ENCODE measurements at regions of chr12 and their contacts with region 1.

Region 1: DNA sequence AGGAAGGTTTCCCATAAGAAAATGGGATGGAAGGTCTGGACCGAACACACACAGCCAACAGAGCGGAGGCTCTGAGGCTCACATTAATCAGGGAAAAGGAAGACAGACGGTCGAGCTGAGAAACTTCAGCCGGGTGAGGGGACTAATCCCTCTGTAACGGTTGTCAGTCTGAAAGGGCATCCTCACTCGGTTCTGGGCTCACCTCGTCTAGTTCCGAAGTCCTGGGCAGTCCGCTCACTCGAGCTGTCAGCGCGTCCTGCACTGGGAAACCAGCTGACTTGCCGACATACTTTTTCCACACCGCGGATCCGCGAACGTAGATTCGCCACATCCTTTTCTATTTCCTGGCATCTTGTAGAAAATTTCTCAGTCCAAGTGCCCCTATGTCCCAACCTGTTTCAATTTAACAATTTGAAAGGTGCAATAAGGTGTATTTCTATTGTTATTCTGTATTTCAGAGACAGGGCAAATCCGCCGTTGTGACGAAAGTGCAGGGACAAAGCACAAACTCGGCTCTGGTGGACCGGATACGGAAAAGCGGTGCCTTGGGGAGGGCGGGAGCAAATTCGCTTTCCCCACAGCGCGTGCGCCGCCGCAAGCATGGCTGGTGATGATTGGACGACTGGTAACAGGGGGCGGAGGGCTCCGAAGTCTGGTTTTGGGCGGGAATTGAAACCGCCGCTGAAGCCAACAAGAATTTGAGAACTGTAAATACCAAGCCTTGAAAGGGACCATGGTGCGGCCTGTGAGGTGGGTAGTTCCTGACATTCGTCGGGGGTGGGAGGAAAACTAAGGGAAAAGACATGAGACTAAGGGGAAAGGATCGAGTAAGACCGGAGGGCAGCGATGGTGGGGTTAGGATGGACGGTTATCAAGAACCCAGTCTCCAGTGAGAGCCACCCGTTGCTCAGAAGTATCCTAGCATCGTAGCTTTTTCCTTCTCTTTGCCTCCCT is at the start of gene RAD51AP1:
- DNase-seq: peak; percentile 90 to 96
- H3K4me3 ChIP-seq: peak within 1 kb of the TSS; percentile 64 to 77
- H3K27ac ChIP-seq: peak within 1 kb of the TSS; percentile 81 to 89
- H3K4me1 ChIP-seq: peaks cover 0 to 17% (median 14%) of the 10 kb centered on the region in 4 donors
- H3K27me3 ChIP-seq: no peaks in the 10 kb centered on the region
- CTCF ChIP-seq: no peak

Region 2: GRCh38 chr12:4307593-4308333 is 230.7 kb before region 1 on chr12:
- intact Hi-C with region 1: loop called (anchors 10 kb)
- DNase-seq: peak; percentile 42 to 79
- H3K4me3 ChIP-seq: no peak overlapping the region
- H3K27ac ChIP-seq: no peak overlapping the region
- H3K4me1 ChIP-seq: peaks cover 0 to 8% (median 4%) of the 10 kb centered on the region in 4 donors
- H3K27me3 ChIP-seq: no peaks in the 10 kb centered on the region
- CTCF ChIP-seq: peak; percentile 57 to 63

Region 3: GRCh38 chr12:4518106-4518728 is 20.3 kb before region 1 on chr12:
- intact Hi-C with region 1: no loop called
- DNase-seq: no peak
- H3K4me3 ChIP-seq: no peak overlapping the region
- H3K27ac ChIP-seq: no peak overlapping the region
- H3K4me1 ChIP-seq: no peaks in the 10 kb centered on the region
- H3K27me3 ChIP-seq: no peaks in the 10 kb centered on the region
- CTCF ChIP-seq: no peak

Region 4: DNA sequence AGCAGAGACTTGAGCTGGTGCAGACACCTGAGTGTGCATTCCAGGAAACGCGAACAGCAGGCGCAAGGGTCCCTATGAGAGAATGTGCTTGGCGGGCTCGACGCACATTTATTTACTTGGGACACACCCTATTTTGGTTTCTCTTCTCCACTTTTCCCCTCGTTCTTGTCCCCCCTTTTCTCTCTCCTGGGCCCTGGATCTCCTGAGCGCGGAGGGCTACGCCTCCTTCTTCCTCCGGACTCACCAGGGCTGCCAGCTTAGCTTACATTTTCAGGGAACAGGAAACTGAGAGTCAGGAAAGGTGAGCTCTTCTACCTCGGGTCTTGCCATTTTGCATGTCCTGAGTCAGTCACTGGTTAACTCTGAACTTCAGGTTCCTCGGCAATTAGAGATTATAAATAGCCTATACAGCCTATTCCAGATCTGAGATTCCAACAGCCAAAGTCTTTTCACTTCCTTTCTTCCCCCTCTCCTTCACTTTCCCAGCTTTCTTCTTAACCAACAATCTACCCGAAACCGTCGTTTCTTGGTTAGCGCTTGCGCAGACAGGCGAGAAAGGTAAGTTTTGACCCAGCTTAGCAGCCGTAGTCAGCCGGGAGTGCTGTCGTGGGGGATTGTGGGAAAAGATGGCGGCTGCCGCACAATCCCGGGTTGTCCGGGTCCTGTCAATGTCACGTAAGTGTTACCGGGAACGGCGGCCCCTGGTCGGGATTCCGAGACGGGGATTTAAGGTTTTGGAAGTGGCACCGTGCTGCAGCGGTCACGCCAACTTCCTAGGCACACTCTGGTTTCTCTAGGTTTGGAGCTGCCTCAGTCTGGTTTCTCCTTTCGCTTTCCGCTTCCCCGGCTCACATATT is 110.2 kb after region 1 on chr12 and contains the starts of genes AKAP3 and NDUFA9:
- intact Hi-C with region 1: loop called (anchors 10 kb)
- DNase-seq: peak; percentile 79 to 85
- H3K4me3 ChIP-seq: peak within 1 kb of the TSS; percentile 74 to 90
- H3K27ac ChIP-seq: peak within 1 kb of the TSS; percentile 82 to 90
- H3K4me1 ChIP-seq: peaks cover 0 to 18% (median 11%) of the 10 kb centered on the region in 4 donors
- H3K27me3 ChIP-seq: no peaks in the 10 kb centered on the region
- CTCF ChIP-seq: no peak

Measured in tibial artery (tissue), 4 donors.